Adrenal gland (tissue), 19 donors: ENCODE measurements at regions of chr2 and their contacts with region 1.

Region 1: GRCh38 chr2:168346725-168347477 is 99.5 kb upstream of the STK39 start:
- DNase-seq: peak; percentile 68 to 89 (median 74)
- H3K4me3 ChIP-seq: peak overlapping the region in 2 of 4 donors; percentile 26 to 58
- H3K27ac ChIP-seq: peak overlapping the region in 1 of 5 donors; percentile 26
- H3K4me1 ChIP-seq: peaks cover 0 to 3% of the 10 kb centered on the region in 2 donors
- H3K27me3 ChIP-seq: no peaks in the 10 kb centered on the region
- CTCF ChIP-seq: peak; percentile 62 to 92 (median 88)
- POLR2A ChIP-seq: no peak

Region 2: GRCh38 chr2:168687314-168687713 is 340.4 kb after region 1 on chr2:
- intact Hi-C with region 1: loop called in 1 of 2 experiments (anchors 5 kb)
- DNase-seq: peak in 4 of 7 donors; percentile 20 to 58 (median 26)
- H3K4me3 ChIP-seq: no peak overlapping the region
- H3K27ac ChIP-seq: no peak overlapping the region
- H3K4me1 ChIP-seq: no peaks in the 10 kb centered on the region
- H3K27me3 ChIP-seq: no peaks in the 10 kb centered on the region
- CTCF ChIP-seq: peak in 4 of 6 experiments; percentile 25 to 45 (median 32)
- POLR2A ChIP-seq: no peak

Region 3: GRCh38 chr2:168758970-168759820 is 412.3 kb after region 1 on chr2:
- intact Hi-C with region 1: loop called (anchors 5 kb)
- DNase-seq: peak in 6 of 7 donors; percentile 25 to 65 (median 37)
- H3K4me3 ChIP-seq: no peak overlapping the region
- H3K27ac ChIP-seq: no peak overlapping the region
- H3K4me1 ChIP-seq: peaks cover 0 to 9% of the 10 kb centered on the region in 2 donors
- H3K27me3 ChIP-seq: no peaks in the 10 kb centered on the region
- CTCF ChIP-seq: peak; percentile 52 to 74 (median 68)
- POLR2A ChIP-seq: no peak

Region 4: GRCh38 chr2:168816369-168816768 is 469.5 kb after region 1 on chr2:
- intact Hi-C with region 1: no loop called
- DNase-seq: peak in 4 of 7 donors; percentile 24 to 50 (median 36)
- H3K4me3 ChIP-seq: no peak overlapping the region
- H3K27ac ChIP-seq: no peak overlapping the region
- H3K4me1 ChIP-seq: peaks cover 8 to 18% of the 10 kb centered on the region in 2 donors
- H3K27me3 ChIP-seq: no peaks in the 10 kb centered on the region
- CTCF ChIP-seq: no peak
- POLR2A ChIP-seq: no peak

Region 5: DNA sequence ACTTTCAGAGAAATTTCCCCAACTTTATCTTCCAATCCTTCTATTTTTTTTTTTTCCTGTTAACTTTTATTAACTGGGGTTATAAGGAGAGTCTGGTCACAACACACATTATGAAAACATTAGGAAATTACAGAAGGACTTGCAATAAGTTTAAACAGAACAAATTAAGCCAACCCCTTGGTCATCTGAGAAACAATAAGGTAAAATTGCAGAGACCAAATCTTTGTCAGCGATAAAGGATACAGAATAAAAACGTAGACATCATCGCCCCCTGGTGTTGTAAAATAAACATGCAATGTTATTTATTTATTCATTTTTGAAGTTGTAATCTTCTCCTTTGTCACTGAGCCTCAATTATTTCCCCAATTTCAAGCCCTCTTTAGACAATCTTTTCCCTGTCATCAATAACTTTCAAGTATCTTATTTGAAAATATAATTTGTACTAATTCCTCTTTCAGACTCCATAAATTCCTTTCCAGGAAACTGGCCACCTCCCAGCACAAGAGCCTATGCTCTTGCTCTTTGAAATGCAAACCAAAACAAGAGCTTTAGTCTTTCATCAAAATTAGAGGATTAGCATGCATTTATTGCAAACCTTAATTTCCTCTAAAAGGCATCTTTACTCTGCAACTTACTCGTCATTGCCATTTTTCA is 573.7 kb after region 1 on chr2:
- intact Hi-C with region 1: loop called (anchors 10 kb)
- DNase-seq: no peak
- H3K4me3 ChIP-seq: no peak overlapping the region
- H3K27ac ChIP-seq: no peak overlapping the region
- H3K4me1 ChIP-seq: no peaks in the 10 kb centered on the region
- H3K27me3 ChIP-seq: no peaks in the 10 kb centered on the region
- CTCF ChIP-seq: peak; percentile 60 to 76 (median 70)
- POLR2A ChIP-seq: no peak

Region 6: DNA sequence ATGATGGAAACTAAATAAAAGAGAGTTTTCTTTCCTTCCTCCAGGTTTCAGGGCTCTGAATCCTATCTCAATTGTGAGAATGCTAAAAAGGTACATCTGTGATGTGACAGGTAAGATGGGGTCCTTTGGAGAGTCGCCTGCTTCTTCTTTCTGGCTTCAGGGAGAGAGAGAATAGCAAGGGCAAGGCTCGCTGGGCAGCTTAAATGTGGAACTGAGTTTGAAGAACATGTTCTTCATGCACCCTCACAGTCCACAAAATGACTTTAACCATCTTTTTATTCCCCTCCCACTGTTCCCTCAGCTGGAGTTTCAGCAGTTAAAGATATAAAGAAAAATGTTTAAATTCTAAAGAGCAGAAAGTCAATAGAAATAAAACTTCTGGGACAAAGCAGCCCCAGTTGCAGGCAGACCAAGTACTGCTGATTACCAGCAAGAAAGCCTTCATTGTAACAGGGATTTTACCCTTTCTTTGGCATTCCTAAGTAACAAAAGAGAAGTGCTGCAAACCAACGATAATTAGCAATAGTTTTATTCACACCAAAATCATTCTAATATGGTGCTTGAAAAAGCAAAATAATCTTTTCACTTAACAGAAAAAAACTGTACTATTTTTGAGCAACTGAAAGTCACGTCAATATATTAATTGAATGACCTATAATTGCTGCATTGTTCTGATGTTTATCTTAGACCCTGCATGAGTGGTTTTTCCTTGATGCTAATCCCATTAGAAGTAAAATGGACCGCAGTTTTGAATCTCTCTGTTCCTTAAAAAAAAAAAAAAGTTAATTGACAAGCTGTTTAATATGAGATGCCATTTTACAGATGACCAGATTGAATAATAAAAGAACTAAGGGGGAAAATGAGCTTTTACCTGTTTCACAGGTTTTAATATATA is 954.0 kb after region 1 on chr2:
- intact Hi-C with region 1: no loop called
- DNase-seq: no peak
- H3K4me3 ChIP-seq: no peak overlapping the region
- H3K27ac ChIP-seq: no peak overlapping the region
- H3K4me1 ChIP-seq: no peaks in the 10 kb centered on the region
- H3K27me3 ChIP-seq: no peaks in the 10 kb centered on the region
- CTCF ChIP-seq: no peak
- POLR2A ChIP-seq: no peak